ENCODE measurements at regions of chr6 and their contacts with region 1.

Region 1: GRCh38 chr6:291697-292505 is at the start of gene DUSP22:
- H3K4me3 Mint-ChIP-seq: peak within 1 kb of the TSS; percentile 89
- H3K27ac Mint-ChIP-seq: peak within 1 kb of the TSS; percentile 95
- H3K4me1 Mint-ChIP-seq: peaks cover 67% of the 10 kb centered on the region
- H3K27me3 Mint-ChIP-seq: no peaks in the 10 kb centered on the region

Region 2: DNA sequence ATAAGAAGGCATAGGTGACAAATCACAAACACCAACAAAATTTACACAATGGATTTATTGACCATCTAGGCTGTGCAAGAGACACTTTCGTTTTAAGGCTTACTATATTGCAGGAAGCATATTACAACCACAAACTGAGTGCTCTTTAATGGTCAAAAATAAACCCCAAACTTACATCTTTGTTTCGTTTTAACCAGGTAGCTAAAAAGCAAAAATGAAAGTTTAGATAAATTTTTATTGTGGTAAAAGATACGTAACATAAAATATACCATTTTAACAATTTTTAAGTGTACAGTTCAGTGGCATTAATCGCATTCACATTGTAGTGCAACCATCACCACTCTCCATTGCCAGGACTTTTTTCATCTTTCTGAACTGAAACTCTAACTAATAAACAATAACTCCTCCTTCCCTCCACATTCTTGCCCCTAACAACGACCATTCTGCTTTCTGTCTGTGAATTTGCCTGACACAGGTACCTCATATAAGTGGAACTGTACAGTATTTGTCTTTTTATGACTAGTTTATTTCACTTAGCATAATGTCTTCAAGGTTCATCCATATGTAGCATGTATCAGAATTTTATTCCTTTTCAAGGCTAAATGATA is 31.9 kb before region 1 on chr6:
- intact Hi-C with region 1: loop called (anchors 2 kb)
- H3K4me3 Mint-ChIP-seq: no peak overlapping the region
- H3K27ac Mint-ChIP-seq: no peak overlapping the region
- H3K4me1 Mint-ChIP-seq: peaks cover 40% of the 10 kb centered on the region
- H3K27me3 Mint-ChIP-seq: no peaks in the 10 kb centered on the region

Region 3: GRCh38 chr6:313087-313486 is 21.2 kb after region 1 on chr6:
- intact Hi-C with region 1: loop called (anchors 1 kb)
- H3K4me3 Mint-ChIP-seq: peak overlapping the region; percentile 57
- H3K27ac Mint-ChIP-seq: peak overlapping the region; percentile 93
- H3K4me1 Mint-ChIP-seq: peaks cover 92% of the 10 kb centered on the region
- H3K27me3 Mint-ChIP-seq: no peaks in the 10 kb centered on the region

Region 4: DNA sequence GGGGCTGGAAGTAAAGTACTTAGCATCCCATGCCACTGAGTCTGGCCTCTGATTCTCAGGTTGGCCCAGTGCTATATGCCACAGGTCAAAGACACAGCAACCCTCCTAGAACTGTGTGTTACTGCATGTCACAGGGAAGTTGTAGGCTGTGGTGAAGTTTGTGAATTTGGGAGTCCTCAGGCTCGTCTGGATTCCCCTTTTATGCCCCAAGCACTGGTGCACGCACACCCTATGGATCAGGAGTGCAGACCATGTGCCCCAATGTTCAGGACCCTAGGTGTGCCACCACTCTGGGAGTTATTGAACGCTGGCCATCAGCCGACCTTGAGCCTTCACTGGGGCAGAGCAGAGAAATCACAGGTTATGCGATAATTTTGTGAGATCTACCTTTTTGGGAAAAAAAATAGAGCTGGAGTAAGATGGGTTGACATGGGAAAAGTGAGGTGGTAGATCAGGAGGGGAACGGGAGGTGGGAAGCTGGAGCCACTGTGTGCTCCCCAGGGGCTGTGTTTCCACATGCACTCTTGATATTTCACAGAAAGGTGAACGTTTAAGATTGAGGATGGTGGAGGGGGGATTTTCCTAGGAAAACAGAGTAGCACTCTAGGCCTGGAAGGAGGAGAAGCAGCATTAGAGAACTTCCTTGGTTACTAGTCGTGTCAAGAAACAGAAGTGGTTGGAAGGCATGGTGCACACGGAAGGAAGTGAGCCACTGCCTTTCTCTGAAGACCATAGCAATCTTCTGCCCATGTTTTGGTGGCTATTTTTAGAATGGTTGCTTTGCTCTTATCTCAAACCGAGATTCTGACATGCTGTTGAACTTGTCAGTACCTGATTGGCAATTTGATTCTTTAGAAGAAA is 44.5 kb after region 1 on chr6:
- intact Hi-C with region 1: loop called (anchors 1 kb)
- H3K4me3 Mint-ChIP-seq: peak overlapping the region; percentile 55
- H3K27ac Mint-ChIP-seq: peak overlapping the region; percentile 97
- H3K4me1 Mint-ChIP-seq: peaks cover 65% of the 10 kb centered on the region
- H3K27me3 Mint-ChIP-seq: no peaks in the 10 kb centered on the region

Region 5: DNA sequence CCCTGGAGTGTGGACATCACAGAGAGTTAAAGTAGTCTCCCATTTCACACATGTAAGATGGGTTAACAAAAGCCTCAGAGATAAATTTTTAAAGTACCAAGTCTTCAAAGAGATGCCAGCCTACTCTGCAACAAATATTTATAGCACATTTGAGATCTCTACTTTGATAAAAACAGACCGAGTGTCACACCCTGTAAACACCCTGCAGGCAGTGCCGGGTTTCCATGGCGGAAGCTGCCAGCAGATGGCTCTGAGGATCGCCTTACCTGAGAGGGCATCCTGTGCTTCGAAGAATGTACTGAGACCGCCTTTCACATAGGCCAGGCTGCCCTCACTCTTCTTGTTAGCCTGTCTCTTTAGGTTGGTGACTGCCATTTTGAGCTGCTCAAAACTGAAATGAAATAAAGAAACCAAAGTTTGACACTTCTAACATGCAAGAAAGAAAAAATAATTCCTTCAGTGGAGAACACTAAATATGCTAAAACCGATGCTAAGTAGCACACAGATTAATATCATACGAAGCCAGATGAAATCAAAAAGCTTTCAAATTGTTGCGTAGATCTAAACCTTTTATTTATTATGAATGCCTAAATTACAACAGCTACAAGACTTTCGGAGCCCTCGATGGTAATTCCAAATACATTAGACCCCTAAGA is 325.7 kb after region 1 on chr6:
- intact Hi-C with region 1: no loop called
- H3K4me3 Mint-ChIP-seq: no peak overlapping the region
- H3K27ac Mint-ChIP-seq: no peak overlapping the region
- H3K4me1 Mint-ChIP-seq: no peaks in the 10 kb centered on the region
- H3K27me3 Mint-ChIP-seq: no peaks in the 10 kb centered on the region